ENCODE measurements at regions of chr12 and their contacts with region 1.

Region 1: DNA sequence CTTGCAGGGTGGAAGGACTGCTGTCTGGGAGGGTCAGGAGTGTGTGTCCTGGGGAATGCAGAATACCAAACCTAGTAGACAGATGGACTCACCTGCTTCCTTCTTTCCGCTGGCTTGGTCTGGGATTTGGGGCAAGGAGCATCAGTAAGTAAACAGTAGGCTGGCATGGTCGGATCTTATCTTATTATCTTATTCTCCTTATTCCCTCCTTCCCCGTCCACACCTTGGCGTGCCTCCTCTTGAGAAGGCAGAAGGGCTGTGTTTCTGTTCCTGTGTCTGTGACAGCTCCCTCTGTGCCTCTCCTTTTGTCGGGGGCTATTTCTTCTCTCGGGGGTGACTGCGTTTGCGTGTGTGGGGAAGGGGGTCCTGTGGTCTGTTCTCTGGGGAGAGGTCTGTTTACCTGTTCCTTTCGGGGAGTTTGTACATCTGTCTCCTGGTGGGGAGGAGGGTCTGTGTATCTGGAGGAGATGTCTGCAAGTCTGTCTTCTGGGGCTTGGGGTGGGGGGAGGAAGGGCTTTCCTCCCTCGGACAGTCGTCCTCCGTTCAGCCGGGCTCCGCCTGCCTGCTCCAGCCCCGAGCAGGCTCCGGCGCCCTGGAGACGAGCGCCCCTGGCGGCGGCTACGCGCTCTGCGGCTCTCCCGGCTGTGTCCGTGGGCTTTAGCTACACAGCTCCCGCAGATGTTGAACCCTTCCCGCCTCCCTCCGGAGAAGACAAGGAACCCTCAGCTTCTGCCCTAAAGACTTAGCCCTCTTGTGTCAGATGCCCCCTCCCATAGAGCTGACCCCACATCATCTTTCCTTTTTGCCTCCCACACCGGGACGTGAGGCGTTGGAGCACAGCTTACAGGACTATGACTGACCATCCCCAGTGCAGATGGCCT is 4.3 kb downstream of the KRT86 start:
- DNase-seq: peak; percentile 77
- H3K4me3 Mint-ChIP-seq: peak overlapping the region; percentile 66
- H3K27ac Mint-ChIP-seq: peak overlapping the region; percentile 98
- H3K4me1 Mint-ChIP-seq: peaks cover 40% of the 10 kb centered on the region
- H3K27me3 Mint-ChIP-seq: no peaks in the 10 kb centered on the region
- CTCF ChIP-seq: peak; percentile 98

Region 2: GRCh38 chr12:52147367-52147972 is 131.3 kb before region 1 on chr12:
- CTCF ChIA-PET with region 1: interaction called, 42 read pairs
- POLR2A ChIA-PET with region 1: interaction called, 33 read pairs
- intact Hi-C with region 1: no loop called
- DNase-seq: peak; percentile 98
- H3K4me3 Mint-ChIP-seq: peak overlapping the region; percentile 39
- H3K27ac Mint-ChIP-seq: peak overlapping the region; percentile 97
- H3K4me1 Mint-ChIP-seq: peaks cover 76% of the 10 kb centered on the region
- H3K27me3 Mint-ChIP-seq: no peaks in the 10 kb centered on the region
- CTCF ChIP-seq: no peak

Region 3: DNA sequence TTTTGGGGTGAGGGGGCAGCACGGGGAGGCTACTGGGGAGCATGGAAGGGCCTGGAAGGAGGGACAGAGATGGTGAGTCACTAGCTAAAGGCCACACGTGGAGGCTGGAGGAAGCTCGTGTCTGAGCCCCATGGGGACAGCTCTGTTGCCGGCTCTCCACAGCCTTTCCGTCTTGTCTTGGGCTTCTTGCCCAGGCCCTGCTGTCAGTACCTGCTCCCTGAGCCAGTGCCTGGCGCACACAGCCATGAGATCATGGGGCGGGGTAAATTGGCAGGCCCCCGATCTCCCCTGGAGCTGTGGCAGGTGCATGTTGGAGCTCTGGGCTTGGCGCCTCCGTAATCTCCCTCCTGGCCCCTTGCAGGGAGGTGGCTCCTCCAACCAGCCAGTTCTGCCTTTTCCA is 70.9 kb before region 1 on chr12:
- CTCF ChIA-PET with region 1: interaction called, 32 read pairs
- POLR2A ChIA-PET with region 1: interaction called, 7 read pairs
- intact Hi-C with region 1: no loop called
- DNase-seq: peak; percentile 87
- H3K4me3 Mint-ChIP-seq: no peak overlapping the region
- H3K27ac Mint-ChIP-seq: peak overlapping the region; percentile 61
- H3K4me1 Mint-ChIP-seq: peaks cover 68% of the 10 kb centered on the region
- H3K27me3 Mint-ChIP-seq: no peaks in the 10 kb centered on the region
- CTCF ChIP-seq: no peak

Region 4: GRCh38 chr12:52243856-52244614 is 34.7 kb before region 1 on chr12:
- CTCF ChIA-PET with region 1: interaction called, 34 read pairs
- POLR2A ChIA-PET with region 1: interaction called, 24 read pairs
- intact Hi-C with region 1: loop called (anchors 2 kb)
- DNase-seq: peak; percentile 98
- H3K4me3 Mint-ChIP-seq: peak overlapping the region; percentile 63
- H3K27ac Mint-ChIP-seq: peak overlapping the region; percentile 99
- H3K4me1 Mint-ChIP-seq: peaks cover 66% of the 10 kb centered on the region
- H3K27me3 Mint-ChIP-seq: no peaks in the 10 kb centered on the region
- CTCF ChIP-seq: no peak

Region 5: GRCh38 chr12:52319097-52319496 is 40.3 kb after region 1 on chr12:
- CTCF ChIA-PET with region 1: interaction called, 12 read pairs
- POLR2A ChIA-PET with region 1: no interaction called
- intact Hi-C with region 1: no loop called
- DNase-seq: peak; percentile 20
- H3K4me3 Mint-ChIP-seq: no peak overlapping the region
- H3K27ac Mint-ChIP-seq: no peak overlapping the region
- H3K4me1 Mint-ChIP-seq: no peaks in the 10 kb centered on the region
- H3K27me3 Mint-ChIP-seq: no peaks in the 10 kb centered on the region
- CTCF ChIP-seq: peak; percentile 23

Region 6: GRCh38 chr12:52495389-52495788 is 216.6 kb after region 1 on chr12:
- CTCF ChIA-PET with region 1: no interaction called
- POLR2A ChIA-PET with region 1: interaction called, 24 read pairs
- intact Hi-C with region 1: no loop called
- DNase-seq: peak; percentile 95
- H3K4me3 Mint-ChIP-seq: peak overlapping the region; percentile 93
- H3K27ac Mint-ChIP-seq: peak overlapping the region; percentile 95
- H3K4me1 Mint-ChIP-seq: peaks cover 64% of the 10 kb centered on the region
- H3K27me3 Mint-ChIP-seq: no peaks in the 10 kb centered on the region
- CTCF ChIP-seq: no peak

Region 7: DNA sequence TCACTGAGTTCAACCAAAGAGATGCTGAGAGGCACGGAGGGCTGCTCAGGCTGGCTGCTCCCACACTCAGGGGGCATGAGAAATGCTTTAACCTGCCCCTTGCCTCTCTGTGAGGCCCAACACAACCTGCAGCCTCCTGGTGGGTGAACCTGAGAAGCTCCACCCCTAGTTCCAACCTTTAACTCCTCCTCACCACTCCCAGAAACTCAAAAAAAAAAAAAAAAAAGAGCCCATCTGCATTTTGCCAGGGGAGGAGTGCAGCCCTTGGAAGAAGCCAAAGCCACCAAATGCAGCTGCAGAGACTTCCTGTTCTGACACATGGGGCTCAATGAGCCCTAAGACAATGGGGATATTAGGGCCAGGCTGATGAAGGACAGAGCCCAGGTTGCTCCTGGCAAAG is 526.2 kb after region 1 on chr12:
- CTCF ChIA-PET with region 1: no interaction called
- POLR2A ChIA-PET with region 1: no interaction called
- intact Hi-C with region 1: no loop called
- DNase-seq: no peak
- H3K4me3 Mint-ChIP-seq: no peak overlapping the region
- H3K27ac Mint-ChIP-seq: no peak overlapping the region
- H3K4me1 Mint-ChIP-seq: peaks cover 3% of the 10 kb centered on the region
- H3K27me3 Mint-ChIP-seq: peaks cover 48% of the 10 kb centered on the region
- CTCF ChIP-seq: no peak